ENCODE measurements at regions of chrX and their contacts with region 1.

Region 1: DNA sequence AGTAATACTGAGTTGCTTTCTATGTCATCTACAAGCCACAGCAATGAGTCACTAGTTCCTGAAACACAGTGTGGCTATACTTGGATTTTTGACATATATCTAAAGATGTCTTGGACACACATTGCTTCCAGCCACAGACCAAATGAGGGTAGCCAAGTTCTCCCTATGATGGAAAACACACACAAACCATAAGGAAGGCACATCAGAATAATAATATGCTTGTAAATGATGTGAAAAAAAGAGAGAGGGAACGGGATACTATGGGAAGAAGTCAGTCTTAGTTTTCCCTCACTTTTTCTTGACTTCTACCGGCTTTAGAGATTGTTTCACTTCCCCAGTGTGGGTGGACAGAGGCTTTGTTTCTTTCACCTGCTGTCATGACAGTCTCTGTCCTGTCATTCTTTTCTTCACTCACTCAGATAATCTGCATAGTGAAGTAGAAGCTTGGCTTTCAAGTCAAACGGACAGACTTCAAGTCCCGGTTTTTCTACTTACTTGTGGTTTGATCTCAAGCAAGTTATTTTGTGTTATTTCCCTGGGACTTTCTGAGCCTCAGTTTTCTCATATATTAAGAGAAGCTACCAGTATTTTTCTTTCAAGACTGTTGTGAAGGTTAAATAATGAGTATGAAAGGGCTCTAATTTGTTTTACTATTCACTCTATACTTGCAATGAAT is 34.7 kb downstream of the P2RY10 start:
- DNase-seq: no peak
- ATAC-seq: no peak
- H3K4me3 ChIP-seq: no peak overlapping the region
- H3K4me3 Mint-ChIP-seq: no peak overlapping the region
- H3K27ac ChIP-seq: no peak overlapping the region
- H3K27ac Mint-ChIP-seq: no peak overlapping the region
- H3K4me1 ChIP-seq: no peaks in the 10 kb centered on the region
- H3K4me1 Mint-ChIP-seq: peaks cover 0 to 11% (median 7%) of the 10 kb centered on the region in 3 donors
- H3K27me3 ChIP-seq: no peaks in the 10 kb centered on the region
- H3K27me3 Mint-ChIP-seq: peaks cover 0 to 23% of the 10 kb centered on the region in 2 donors

Region 2: GRCh38 chrX:78950009-78950835 is 29.7 kb before region 1 on chrX:
- CTCF ChIA-PET with region 1: no interaction called
- POLR2A ChIA-PET with region 1: interaction called in 1 of 2 experiments, 10 read pairs
- DNase-seq: no peak
- ATAC-seq: no peak
- H3K4me3 ChIP-seq: no peak overlapping the region
- H3K4me3 Mint-ChIP-seq: peak overlapping the region; percentile 78 to 99 (median 95)
- H3K27ac ChIP-seq: peak overlapping the region; percentile 34
- H3K27ac Mint-ChIP-seq: peak overlapping the region; percentile 88 to 91
- H3K4me1 ChIP-seq: peaks cover 3 to 18% of the 10 kb centered on the region in 2 experiments
- H3K4me1 Mint-ChIP-seq: peaks cover 56 to 63% (median 58%) of the 10 kb centered on the region in 3 donors
- H3K27me3 ChIP-seq: no peaks in the 10 kb centered on the region
- H3K27me3 Mint-ChIP-seq: no peaks in the 10 kb centered on the region

Region 3: DNA sequence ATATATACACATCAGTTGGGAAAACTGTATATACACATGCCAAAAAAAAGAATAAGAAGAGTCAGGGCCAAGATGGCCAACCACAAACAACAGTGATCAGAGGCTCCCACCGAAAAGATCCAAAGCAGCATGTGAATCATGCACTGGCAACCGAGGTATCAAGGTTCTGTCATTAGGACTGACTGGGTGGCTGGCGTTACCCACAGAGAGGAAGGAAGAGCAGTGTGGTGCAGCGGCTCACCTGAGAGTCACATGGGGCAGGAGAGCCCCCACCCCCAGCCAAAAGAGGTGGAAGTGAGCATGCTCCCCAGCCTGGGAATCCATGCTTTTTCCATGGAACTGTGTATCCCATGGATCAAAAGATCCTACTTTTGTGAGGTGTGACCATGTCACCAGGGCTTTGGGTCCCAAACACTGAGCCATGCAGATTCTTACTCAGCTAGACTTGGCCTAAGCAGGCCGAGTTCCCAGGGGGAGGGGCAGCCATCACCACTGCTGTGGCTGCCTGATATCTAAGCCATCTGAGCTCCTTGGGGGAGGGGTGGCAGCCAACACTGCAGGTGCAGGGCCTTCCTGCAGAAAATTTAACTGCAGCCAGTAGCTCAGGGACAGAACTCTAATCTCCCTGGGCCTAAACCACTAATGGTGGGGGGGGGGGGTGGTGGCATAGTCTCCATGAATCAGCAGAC is 18.1 kb after region 1 on chrX:
- CTCF ChIA-PET with region 1: no interaction called
- POLR2A ChIA-PET with region 1: no interaction called
- DNase-seq: peak in 23 of 35 experiments; percentile 0 to 25 (median 4)
- ATAC-seq: peak in 3 of 4 experiments; percentile 47 to 70 (median 47)
- H3K4me3 ChIP-seq: no peak overlapping the region
- H3K4me3 Mint-ChIP-seq: no peak overlapping the region
- H3K27ac ChIP-seq: no peak overlapping the region
- H3K27ac Mint-ChIP-seq: peak overlapping the region in 1 of 2 donors; percentile 62
- H3K4me1 ChIP-seq: peaks cover 0 to 9% of the 10 kb centered on the region in 2 experiments
- H3K4me1 Mint-ChIP-seq: peaks cover 7 to 20% (median 9%) of the 10 kb centered on the region in 3 donors
- H3K27me3 ChIP-seq: no peaks in the 10 kb centered on the region
- H3K27me3 Mint-ChIP-seq: peaks cover 0 to 17% of the 10 kb centered on the region in 2 donors

Measured in T-cell (primary cell).